Activated CD8-positive, alpha-beta T cell treated with anti-CD3 and anti-CD28 coated beads, Interleukin-2, amount 10 ng/mL, durations not matched to agents 7 days and 5 days (primary cell): ENCODE measurements at regions of chr1 and their contacts with region 1.

Region 1: DNA sequence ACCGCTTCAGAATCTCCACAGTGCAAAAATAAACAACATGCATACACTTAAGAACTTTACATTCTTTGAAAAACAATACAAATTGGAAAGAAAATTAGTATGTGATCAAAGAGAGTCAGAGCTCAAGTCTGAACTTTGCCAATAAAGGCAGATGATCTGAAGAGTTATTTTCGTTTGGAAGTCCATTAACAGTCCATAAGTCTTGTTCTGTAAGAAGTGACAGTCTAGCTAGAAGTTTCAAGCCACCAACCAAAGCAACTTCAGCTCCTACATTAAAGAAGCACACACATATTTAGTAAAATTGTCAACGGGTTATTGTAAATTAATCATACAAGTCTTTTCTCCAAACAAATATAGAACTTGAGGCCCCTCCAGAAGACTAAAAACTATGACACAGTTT is 20.7 kb downstream of the ANGEL2 start:
- DNase-seq: no peak
- ATAC-seq: no peak
- H3K4me3 Mint-ChIP-seq: no peak overlapping the region
- H3K27ac Mint-ChIP-seq: no peak overlapping the region
- H3K4me1 Mint-ChIP-seq: peaks cover 1% of the 10 kb centered on the region
- H3K27me3 Mint-ChIP-seq: no peaks in the 10 kb centered on the region

Region 2: DNA sequence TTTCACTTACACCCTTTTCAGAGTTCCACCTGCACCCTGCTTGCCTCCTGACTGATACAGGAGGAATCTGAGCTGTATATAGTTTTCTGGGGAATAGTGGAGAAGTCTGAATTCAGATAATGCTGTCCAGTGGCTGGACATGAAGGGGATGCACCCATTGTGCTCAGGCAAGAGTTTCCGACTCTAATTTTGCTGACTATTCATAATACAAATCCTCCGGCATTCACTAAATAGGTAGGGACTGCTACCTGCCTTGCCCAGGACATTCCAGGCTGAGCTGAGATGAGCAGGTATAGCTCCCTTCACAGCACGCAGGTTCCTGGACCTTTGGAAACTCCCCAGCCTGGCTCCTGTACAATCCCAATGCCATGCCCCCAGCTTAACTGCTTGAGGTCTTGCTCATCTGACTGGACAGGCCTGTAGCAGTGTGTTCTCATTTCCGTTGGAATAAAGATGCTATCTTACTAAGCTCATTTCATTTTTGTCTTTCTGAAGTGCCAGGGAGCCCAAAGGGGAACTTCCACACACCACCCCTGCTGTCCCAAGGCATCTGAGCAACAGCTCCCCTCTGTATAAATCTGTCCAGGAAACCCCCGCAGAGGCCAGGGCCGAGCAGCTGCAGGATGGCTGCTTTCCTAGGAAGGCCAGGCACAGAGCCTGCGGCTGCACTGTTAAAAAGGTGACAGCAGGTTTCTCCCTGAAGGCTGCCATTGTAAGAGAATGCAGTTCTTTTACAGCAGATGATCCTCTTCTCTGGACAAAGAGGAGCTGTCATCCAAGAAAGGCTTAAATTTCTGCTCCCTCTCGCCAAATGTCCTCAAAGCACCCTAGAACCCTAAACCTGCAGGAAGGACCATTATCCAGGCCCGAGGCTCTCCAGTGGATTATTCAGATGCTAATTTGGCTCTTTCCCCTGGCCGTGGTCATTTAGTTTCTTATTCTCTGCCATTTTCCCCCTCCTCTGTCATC is 66.3 kb before region 1 on chr1:
- CTCF ChIA-PET with region 1: no interaction called
- POLR2A ChIA-PET with region 1: no interaction called
- DNase-seq: no peak
- ATAC-seq: no peak
- H3K4me3 Mint-ChIP-seq: no peak overlapping the region
- H3K27ac Mint-ChIP-seq: no peak overlapping the region
- H3K4me1 Mint-ChIP-seq: peaks cover 2% of the 10 kb centered on the region
- H3K27me3 Mint-ChIP-seq: peaks cover 2% of the 10 kb centered on the region

Region 3: GRCh38 chr1:213008564-213008963 is 13.6 kb after region 1 on chr1:
- CTCF ChIA-PET with region 1: interaction called, 12 read pairs
- POLR2A ChIA-PET with region 1: no interaction called
- DNase-seq: no peak
- ATAC-seq: peak; percentile 49
- H3K4me3 Mint-ChIP-seq: no peak overlapping the region
- H3K27ac Mint-ChIP-seq: no peak overlapping the region
- H3K4me1 Mint-ChIP-seq: peaks cover 32% of the 10 kb centered on the region
- H3K27me3 Mint-ChIP-seq: no peaks in the 10 kb centered on the region

Region 4: DNA sequence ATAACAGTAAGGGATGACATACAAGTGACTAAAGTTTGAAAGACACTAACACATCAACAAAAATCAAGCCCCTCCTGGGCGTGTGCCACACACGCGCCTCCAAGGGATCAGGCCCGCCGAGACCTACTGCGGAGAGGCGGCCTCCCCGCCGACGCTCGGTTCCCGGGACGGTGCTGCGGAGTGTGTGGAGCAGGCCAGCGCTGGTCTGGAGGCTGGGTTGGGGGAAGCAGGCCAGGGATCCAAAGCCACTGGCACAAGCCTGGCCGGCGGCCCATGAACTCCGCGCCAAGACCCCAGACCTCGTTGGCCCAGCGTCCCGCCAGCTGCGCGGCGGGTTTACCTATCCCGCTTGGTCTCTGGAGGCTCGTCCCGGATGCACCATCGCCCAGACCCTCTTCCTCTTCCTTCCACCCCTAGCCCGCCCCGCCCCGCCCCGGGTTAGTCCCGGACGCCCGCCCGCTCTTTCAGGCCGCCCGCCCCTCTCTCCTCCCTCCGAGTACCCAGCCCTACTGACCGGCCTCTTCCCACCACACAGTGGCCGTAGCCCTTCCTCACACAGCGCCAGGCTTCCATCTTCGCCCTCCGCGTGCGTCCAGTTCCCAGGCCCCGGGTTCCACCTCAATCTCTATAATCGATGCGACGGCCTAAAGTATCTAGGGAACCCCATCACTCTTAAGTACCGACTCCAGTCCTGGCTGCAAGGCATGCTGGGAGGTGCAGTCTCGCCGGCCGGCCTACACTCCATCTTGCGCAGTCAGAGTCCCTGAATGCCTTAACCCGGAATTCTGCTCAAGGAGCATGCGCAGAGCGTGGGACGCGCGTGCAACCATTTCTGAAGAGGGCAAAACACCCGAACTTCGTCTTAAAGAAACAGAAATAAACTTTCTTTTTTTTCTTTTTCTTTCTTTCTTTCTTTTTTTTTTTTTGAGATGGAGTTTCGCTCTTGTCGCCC is 20.4 kb after region 1 on chr1 and contains the start of gene ANGEL2:
- CTCF ChIA-PET with region 1: interaction called, 10 read pairs
- POLR2A ChIA-PET with region 1: no interaction called
- DNase-seq: peak; percentile 98
- ATAC-seq: peak; percentile 98
- H3K4me3 Mint-ChIP-seq: peak within 1 kb of the TSS; percentile 100
- H3K27ac Mint-ChIP-seq: peak within 1 kb of the TSS; percentile 99
- H3K4me1 Mint-ChIP-seq: peaks cover 33% of the 10 kb centered on the region
- H3K27me3 Mint-ChIP-seq: no peaks in the 10 kb centered on the region
- total RNA-seq, gene ANGEL2: 39.6 to 41.5 TPM